ENCODE measurements at regions of chr19 and their contacts with region 1.

Region 1: DNA sequence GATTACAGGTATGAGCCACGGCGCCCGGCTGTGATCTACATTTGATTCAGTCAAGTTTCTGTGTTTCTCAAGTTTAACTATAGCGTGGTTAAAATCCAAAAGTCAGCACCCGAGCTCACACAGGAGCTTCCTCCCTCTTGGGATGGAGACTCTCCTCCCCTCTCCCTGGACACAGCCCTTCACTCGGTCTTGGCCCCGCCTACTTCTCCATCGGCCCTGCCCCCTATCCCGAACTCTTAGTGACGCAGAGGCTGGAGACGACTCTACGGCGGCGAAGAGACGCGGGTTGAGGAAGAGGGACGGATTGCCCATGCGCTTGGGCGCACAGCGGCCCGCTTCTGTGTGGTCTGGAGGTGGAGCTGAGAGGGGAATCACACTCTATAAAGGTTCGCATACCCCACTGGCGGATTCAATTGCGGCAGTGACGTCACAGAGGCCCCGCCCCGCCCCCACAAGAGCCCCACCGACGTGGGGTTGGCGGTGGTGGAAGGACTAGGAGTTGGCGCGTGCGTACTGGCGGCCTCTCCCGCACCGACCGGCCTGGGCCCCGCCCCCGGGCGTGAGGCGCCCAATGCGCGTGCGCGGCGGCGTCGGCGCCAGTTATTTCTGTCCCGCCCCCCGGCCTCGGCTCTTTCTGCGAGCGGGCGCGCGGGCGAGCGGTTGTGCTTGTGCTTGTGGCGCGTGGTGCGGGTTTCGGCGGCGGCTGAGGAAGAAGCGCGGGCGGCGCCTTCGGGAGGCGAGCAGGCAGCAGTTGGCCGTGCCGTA is at the start of gene TRIM28:
- DNase-seq: peak; percentile 100
- H3K4me3 Mint-ChIP-seq: peak within 1 kb of the TSS; percentile 94
- H3K27ac Mint-ChIP-seq: peak within 1 kb of the TSS; percentile 96
- H3K4me1 Mint-ChIP-seq: peaks cover 23% of the 10 kb centered on the region
- H3K27me3 Mint-ChIP-seq: peaks cover 6% of the 10 kb centered on the region
- total RNA-seq, gene TRIM28: 664 and 687 TPM in 2 replicates

Region 2: DNA sequence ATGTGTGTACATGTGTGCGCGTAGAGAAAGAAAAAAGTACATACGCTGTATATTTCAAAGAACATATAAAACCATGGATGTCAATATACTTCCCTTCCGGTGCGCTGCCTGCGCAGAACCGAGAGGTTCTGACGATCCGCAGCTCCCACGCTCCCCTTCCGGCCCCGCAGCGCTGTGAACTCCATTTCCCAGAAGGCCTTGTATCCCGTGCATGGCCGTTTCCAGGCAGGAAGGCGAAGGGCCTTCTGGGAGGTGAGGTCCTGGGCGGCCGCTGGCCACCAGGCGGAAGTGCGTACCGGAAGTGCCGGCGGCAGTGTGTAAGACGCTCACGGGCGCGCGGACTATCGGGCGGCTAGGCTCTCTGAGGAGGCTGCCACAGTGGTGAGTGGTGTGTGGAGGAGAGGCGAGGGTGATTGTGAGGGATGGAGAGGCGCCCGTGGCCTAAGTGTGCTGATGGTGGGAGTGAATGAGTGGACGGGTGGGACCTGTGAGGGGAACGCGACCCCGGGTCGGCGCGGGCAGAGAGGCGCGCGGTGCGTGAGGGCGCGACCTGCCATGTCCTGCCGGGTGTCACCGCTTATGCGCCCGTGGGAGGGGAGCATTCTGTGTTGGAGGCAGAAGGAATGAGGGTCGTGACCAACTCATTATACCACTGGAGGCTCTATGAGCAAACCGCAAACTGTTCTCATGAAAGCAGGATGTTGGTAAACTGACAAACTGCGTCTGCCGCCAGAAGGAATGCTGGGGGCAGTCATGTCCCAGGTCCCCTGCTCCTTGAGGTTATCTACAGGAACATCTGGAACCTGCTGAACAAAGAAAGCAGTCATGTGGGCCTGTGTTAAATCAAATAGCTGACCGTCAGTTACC is 238.7 kb before region 1 on chr19 and contains the start of gene ERVK3-1:
- intact Hi-C with region 1: no loop called
- DNase-seq: peak; percentile 95
- H3K4me3 Mint-ChIP-seq: peak within 1 kb of the TSS; percentile 97
- H3K27ac Mint-ChIP-seq: peak within 1 kb of the TSS; percentile 96
- H3K4me1 Mint-ChIP-seq: peaks cover 43% of the 10 kb centered on the region
- H3K27me3 Mint-ChIP-seq: no peaks in the 10 kb centered on the region
- total RNA-seq, gene ERVK3-1: 87.1 and 96.7 TPM in 2 replicates

Region 3: GRCh38 chr19:58466760-58467589 is 77.0 kb before region 1 on chr19 and contains the start of gene ZNF324:
- intact Hi-C with region 1: loop called (anchors 2 kb)
- DNase-seq: peak; percentile 96
- H3K4me3 Mint-ChIP-seq: peak within 1 kb of the TSS; percentile 88
- H3K27ac Mint-ChIP-seq: peak within 1 kb of the TSS; percentile 71
- H3K4me1 Mint-ChIP-seq: peaks cover 17% of the 10 kb centered on the region
- H3K27me3 Mint-ChIP-seq: no peaks in the 10 kb centered on the region
- total RNA-seq, gene ZNF324: 12.8 and 15.5 TPM in 2 replicates

Region 4: GRCh38 chr19:58499021-58499927 is 44.7 kb before region 1 on chr19:
- intact Hi-C with region 1: loop called (anchors 1 kb)
- DNase-seq: peak; percentile 96
- H3K4me3 Mint-ChIP-seq: peak overlapping the region; percentile 91
- H3K27ac Mint-ChIP-seq: peak overlapping the region; percentile 91
- H3K4me1 Mint-ChIP-seq: peaks cover 21% of the 10 kb centered on the region
- H3K27me3 Mint-ChIP-seq: peaks cover 7% of the 10 kb centered on the region

Region 5: DNA sequence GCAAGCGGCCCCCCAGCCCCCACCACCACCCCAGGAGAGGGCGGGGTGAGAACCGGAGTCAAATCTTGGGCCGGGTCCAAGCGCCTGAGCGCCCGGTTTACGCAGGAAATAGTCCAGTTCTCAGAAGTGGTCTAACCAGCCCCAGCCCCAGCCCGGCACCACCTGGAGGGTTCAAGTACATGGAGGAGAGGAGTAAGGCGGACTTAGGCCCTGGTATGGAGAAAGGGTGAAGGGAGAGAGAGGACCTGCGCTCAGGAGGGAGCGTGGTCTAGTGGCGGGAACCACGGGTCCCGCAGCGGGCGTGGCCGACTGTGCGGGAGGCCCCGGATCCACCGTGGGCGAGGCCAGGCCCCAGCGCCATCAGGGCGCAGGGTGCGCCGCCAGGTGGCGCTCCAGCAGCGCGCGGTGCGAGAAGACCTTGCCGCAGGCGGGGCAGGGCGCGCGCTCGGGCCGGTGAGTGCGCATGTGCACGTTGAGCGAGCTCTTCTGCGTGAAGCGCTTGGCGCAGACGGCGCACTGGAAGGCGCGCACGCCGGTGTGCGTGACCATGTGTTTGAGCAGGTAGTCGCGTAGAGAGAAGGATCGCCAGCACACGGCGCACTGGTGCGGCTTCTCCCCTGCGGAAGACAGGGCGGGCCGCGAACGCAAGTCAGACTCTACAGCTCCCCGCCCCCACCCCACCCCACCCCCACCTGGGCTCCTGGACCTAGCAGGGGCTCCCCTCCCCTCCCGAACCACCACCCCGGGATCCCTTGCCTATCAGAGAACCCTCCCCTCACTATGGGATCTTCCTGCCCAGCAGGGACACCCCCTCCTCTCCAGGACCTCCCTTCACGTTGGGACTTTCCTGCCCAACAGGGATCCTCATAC is 30.1 kb before region 1 on chr19:
- intact Hi-C with region 1: loop called (anchors 1 kb)
- DNase-seq: peak; percentile 96
- H3K4me3 Mint-ChIP-seq: peak overlapping the region; percentile 91
- H3K27ac Mint-ChIP-seq: peak overlapping the region; percentile 96
- H3K4me1 Mint-ChIP-seq: peaks cover 20% of the 10 kb centered on the region
- H3K27me3 Mint-ChIP-seq: peaks cover 3% of the 10 kb centered on the region

Region 6: DNA sequence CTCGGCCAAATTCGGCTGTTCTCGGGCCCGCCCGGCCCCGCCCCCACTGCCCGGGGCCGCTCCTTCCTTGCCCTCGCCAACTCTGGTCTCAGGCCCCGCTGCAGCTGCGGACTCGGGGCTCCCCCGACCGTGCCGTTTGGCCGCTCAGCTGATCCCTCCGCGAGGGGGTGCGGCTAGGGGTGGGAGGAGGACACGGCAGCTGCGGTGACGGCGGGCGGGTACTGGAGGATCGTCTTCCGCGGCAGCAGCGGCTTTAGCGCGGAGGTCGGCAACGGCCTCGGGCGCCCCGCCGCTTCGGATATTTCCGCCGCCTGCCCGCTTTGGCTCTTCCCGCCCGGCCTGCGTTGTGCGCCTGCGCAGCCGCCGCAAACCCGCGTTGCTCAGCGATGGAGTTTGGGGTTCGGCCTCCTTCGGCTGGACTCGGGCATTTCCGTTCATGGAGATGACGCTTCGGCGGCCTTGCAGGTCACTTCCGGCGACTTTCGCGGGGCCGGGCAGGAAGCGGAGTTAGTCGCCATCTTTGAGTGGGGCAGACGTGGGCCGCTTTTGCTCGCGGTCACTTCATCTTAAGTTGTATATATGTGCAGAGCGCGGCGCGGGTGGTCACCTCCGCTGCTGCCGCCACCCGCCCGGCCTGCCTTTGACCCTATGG is 14.7 kb after region 1 on chr19:
- intact Hi-C with region 1: loop called (anchors 1 kb)
- DNase-seq: peak; percentile 100
- H3K4me3 Mint-ChIP-seq: peak overlapping the region; percentile 95
- H3K27ac Mint-ChIP-seq: peak overlapping the region; percentile 99
- H3K4me1 Mint-ChIP-seq: peaks cover 66% of the 10 kb centered on the region
- H3K27me3 Mint-ChIP-seq: peaks cover 1% of the 10 kb centered on the region

Region 7: DNA sequence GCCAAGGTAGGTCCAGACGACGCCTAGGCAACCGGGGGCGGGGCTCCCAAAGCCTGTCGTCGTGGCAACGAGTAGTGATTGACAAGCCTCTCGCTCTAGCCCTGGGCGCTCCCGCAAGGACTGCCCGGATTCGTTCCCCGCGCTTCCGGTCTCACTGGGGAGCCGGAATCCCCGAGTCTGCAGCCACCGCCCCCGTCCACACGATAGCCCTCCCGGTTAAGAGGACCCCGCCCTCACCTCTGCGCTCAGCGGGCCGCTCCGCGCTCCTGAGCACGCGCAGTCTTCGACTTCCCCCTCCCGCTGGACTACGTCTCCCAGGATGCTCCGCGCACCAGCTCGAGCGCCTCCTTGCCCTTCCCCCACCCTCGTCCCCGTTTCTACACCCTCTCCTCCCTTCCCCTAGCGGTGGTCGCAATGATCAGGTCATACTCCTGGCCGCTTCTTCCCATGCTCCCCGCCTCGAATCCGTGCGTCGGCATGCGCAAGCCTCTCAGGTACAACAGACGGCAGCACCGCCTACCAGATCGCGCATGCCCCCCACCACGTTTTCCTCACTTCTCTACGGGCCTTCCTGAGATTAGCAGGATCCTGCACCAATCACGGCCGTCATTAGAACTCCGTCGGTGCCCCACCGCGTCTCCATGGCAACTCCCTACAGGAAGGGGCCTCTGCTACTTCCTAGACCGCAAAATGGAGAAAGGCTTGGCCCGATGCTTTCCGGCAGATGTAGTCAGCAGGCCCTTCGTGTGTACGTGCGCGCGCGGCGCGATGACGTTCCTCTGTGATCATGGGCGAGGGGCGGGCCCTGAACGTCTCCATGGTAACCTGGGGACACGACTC is 29.0 kb after region 1 on chr19 and contains the start of gene MZF1:
- intact Hi-C with region 1: loop called (anchors 1 kb)
- DNase-seq: peak; percentile 100
- H3K4me3 Mint-ChIP-seq: peak within 1 kb of the TSS; percentile 95
- H3K27ac Mint-ChIP-seq: peak within 1 kb of the TSS; percentile 99
- H3K4me1 Mint-ChIP-seq: peaks cover 41% of the 10 kb centered on the region
- H3K27me3 Mint-ChIP-seq: no peaks in the 10 kb centered on the region
- total RNA-seq, gene MZF1: 19.6 and 21.6 TPM in 2 replicates